H1 (cell line): ENCODE measurements at regions of chr9 and their contacts with region 1.

Region 1: DNA sequence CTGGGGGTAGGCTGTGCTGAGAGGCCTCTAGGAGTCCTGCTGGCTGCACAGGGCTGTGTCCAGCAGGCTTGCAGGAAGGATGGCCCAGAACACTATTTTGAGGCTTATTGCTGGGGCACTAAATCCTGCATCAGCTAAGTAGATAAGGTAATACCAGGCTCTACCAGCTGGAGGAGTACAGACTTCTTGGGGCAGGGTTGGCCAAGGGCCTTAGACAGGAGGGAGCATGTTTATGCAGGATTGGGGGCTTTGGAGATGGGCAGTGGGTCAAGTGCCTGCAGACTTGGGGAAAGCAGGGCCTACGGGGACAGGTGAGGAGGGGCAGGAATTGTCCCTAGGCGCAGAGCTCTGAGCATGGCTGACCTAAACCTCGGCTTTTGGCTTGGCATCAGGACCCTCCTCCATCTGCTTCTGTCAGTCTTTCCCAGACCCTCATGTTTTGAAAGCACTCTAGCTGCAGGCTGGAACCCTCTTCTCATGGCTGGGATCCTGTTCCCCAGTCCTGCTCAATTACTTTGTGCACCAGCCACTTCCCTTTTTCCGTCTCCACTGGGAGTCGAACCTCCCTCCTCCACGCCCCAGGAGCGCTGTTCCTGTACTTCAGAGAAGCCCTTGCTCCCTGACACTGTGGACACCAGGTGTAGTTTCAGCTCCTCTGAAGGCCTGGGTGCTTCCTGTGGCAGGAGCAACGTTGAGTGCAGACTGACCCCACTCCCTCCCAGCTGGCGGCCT is 61.0 kb upstream of the SPTLC1 start:
- DNase-seq: no peak
- H3K4me3 ChIP-seq: no peak overlapping the region
- H3K27ac ChIP-seq: no peak overlapping the region
- H3K4me1 ChIP-seq: peaks cover 0 to 4% (median 0%) of the 10 kb centered on the region in 4 experiments; a peak in 1 of 7 replicates
- H3K27me3 ChIP-seq: no peaks in the 10 kb centered on the region
- CTCF ChIP-seq: peak; percentile 21 to 69 (median 40)
- EP300 ChIP-seq: no peak
- POLR2A ChIP-seq: no peak
- RAD21 ChIP-seq: peak; percentile 51 to 65

Region 2: DNA sequence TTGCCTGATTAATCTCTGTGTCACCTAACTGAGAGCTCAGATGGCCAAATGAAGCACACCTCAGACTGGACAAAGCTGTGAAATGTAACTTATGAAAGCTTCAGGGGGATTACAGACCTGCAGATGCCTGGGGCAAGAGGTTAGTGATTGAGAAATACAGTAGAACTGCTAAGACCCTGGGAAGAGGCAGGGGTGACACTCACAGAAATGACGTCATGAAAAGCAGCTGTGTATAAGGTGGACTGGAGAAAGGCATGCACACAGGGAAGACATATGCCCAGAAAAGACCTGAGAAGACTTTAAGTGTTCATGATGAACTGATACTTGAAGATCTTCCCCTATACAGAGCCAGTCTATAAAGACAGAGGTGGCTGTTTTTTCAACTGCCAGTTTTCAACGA is 11.7 kb before region 1 on chr9:
- CTCF ChIA-PET with region 1: interaction called, 14 read pairs
- POLR2A ChIA-PET with region 1: no interaction called
- DNase-seq: no peak
- H3K4me3 ChIP-seq: no peak overlapping the region
- H3K27ac ChIP-seq: no peak overlapping the region
- H3K4me1 ChIP-seq: no peaks in the 10 kb centered on the region
- H3K27me3 ChIP-seq: no peaks in the 10 kb centered on the region
- CTCF ChIP-seq: no peak
- EP300 ChIP-seq: no peak
- POLR2A ChIP-seq: no peak
- RAD21 ChIP-seq: no peak

Region 3: GRCh38 chr9:92191801-92192200 is 15.6 kb after region 1 on chr9:
- CTCF ChIA-PET with region 1: interaction called, 30 read pairs
- POLR2A ChIA-PET with region 1: no interaction called
- DNase-seq: no peak
- H3K4me3 ChIP-seq: no peak overlapping the region
- H3K27ac ChIP-seq: no peak overlapping the region
- H3K4me1 ChIP-seq: peaks cover 0 to 4% (median 0%) of the 10 kb centered on the region in 4 experiments; a peak in 1 of 7 replicates
- H3K27me3 ChIP-seq: no peaks in the 10 kb centered on the region
- CTCF ChIP-seq: no peak
- EP300 ChIP-seq: no peak
- POLR2A ChIP-seq: no peak
- RAD21 ChIP-seq: no peak

Region 4: DNA sequence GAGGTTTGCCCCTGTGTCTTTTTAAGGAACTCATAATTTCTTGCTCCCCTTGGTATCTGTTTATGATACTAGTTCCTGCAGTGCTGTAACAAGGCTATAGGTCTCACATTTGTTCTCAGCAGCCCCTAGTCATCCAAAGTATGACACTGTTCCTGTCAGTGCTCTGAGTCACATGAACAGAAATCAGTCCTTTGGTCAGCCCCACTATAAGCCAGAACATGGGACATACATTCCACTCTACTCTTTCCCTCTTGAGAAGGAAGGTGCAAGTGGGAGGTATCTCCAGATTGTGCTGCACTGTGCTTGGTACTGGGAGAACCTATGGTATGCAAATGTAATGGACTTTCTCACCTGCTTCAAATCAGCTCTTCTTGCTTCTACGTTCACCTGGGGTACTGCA is 30.3 kb after region 1 on chr9:
- CTCF ChIA-PET with region 1: interaction called, 10 read pairs
- POLR2A ChIA-PET with region 1: interaction called, 4 read pairs
- DNase-seq: no peak
- H3K4me3 ChIP-seq: no peak overlapping the region
- H3K27ac ChIP-seq: no peak overlapping the region
- H3K4me1 ChIP-seq: no peaks in the 10 kb centered on the region
- H3K27me3 ChIP-seq: no peaks in the 10 kb centered on the region
- CTCF ChIP-seq: no peak
- EP300 ChIP-seq: no peak
- POLR2A ChIP-seq: no peak
- RAD21 ChIP-seq: no peak